Natural killer cell (primary cell): ENCODE measurements at regions of chr2 and their contacts with region 1.

Region 1: DNA sequence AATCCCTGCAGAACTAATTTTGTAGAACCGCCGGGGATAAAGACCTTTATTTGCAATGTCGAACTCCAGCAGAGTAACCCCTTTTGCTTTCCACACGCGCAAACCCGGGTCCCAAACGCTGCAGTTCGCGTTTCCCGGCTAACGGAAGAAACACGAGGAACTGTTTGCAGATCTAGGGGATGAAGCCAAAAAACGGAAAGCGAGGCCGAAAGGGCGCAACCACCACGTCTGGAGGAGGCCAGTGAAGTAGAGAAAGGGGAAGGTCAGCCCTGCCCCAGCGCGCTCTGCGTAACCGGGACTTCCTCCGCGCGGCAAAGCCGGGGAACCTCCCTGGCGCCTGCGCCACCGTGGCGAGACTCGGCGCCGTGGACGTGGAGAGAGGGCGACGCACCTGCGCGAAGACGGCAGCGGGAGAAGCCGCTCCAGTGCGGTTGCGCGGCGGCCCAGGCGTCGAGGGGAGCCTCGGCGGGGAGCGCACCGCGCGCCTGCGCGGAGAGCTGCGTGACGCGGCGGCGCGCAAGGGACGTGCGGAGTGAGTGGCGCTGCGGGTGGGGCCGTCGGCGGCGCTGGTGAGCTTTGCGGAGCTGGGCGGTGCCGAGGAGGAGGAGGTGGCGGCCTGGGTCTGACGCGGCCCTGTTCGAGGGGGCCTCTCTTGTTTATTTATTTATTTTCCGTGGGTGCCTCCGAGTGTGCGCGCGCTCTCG is at the start of gene PPP1CB:
- DNase-seq: peak; percentile 96 to 100
- ATAC-seq: peak; percentile 84 to 93 (median 85)
- H3K4me3 ChIP-seq: peak within 1 kb of the TSS; percentile 92
- H3K4me3 Mint-ChIP-seq: peak within 1 kb of the TSS; percentile 97
- H3K27ac ChIP-seq: peak within 1 kb of the TSS; percentile 98
- H3K27ac Mint-ChIP-seq: peak within 1 kb of the TSS; percentile 95 to 96
- H3K4me1 ChIP-seq: peaks cover 20% of the 10 kb centered on the region
- H3K4me1 Mint-ChIP-seq: peaks cover 44 to 45% of the 10 kb centered on the region in 2 donors
- H3K27me3 ChIP-seq: no peaks in the 10 kb centered on the region
- H3K27me3 Mint-ChIP-seq: no peaks in the 10 kb centered on the region
- CTCF ChIP-seq: peak; percentile 9
- total RNA-seq, gene PPP1CB: 157 to 200 (median 181) TPM

Region 2: DNA sequence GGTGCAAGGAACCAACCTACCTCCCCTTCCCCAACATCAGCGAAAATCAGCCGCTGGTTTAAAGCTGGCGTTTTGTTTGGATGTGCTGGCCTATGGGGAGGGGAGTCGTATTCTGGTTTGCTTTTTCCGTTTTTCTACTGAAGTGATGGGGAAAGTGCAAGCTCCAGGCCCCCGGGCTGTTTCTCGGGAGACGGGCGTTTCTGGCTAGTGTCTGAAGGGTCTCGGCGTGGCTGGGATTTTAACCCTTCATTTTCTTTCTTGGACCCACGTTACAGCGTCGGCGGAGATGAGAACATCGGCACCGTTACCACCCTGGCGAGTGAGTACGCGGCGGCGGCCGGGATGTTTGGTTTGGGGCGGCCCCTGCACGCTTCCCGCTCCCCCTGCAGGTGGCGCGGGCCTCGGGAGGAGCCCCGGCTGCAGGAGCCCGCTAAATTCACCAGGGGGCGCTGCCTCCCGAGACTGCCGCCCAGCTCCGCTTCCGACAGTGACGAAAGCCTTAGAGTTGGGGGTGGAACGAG is 184.8 kb before region 1 on chr2:
- intact Hi-C with region 1: loop called (anchors 10 kb)
- DNase-seq: peak; percentile 92 to 94
- ATAC-seq: peak; percentile 98 to 99 (median 99)
- H3K4me3 ChIP-seq: peak overlapping the region; percentile 95
- H3K4me3 Mint-ChIP-seq: peak overlapping the region; percentile 91
- H3K27ac ChIP-seq: peak overlapping the region; percentile 17
- H3K27ac Mint-ChIP-seq: peak overlapping the region; percentile 68 to 93
- H3K4me1 ChIP-seq: peaks cover 14% of the 10 kb centered on the region
- H3K4me1 Mint-ChIP-seq: peaks cover 5 to 9% of the 10 kb centered on the region in 2 donors
- H3K27me3 ChIP-seq: no peaks in the 10 kb centered on the region
- H3K27me3 Mint-ChIP-seq: peaks cover 0 to 11% of the 10 kb centered on the region in 2 donors
- CTCF ChIP-seq: peak; percentile 99

Region 3: GRCh38 chr2:28621172-28622100 is 130.0 kb before region 1 on chr2:
- intact Hi-C with region 1: loop called (anchors 10 kb)
- DNase-seq: peak; percentile 53 to 95
- ATAC-seq: peak; percentile 77 to 89 (median 81)
- H3K4me3 ChIP-seq: no peak overlapping the region
- H3K4me3 Mint-ChIP-seq: peak overlapping the region; percentile 78
- H3K27ac ChIP-seq: peak overlapping the region; percentile 92
- H3K27ac Mint-ChIP-seq: peak overlapping the region; percentile 91 to 94
- H3K4me1 ChIP-seq: peaks cover 66% of the 10 kb centered on the region
- H3K4me1 Mint-ChIP-seq: peaks cover 60 to 65% of the 10 kb centered on the region in 2 donors
- H3K27me3 ChIP-seq: no peaks in the 10 kb centered on the region
- H3K27me3 Mint-ChIP-seq: no peaks in the 10 kb centered on the region
- CTCF ChIP-seq: no peak

Region 4: DNA sequence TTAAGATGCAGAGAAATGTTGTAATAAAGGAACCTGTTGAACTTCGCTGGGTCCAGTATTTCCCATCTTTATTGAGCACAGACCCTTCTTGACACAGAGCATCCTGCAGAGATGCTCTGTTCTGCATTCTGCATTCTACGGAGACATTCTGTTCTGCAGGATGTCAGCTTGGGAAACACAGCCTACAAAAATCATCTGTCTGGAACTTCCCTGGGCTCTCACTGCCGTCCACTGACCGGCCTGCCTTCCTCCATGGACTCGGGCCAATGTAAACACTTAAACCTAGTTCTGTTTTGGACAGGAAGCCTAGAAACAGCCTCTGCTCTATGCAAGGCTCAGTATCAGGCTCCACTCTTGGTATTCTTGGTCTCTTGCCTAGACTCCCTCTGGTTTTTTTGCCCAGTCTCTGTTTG is 89.8 kb before region 1 on chr2:
- intact Hi-C with region 1: no loop called
- DNase-seq: no peak
- ATAC-seq: no peak
- H3K4me3 ChIP-seq: no peak overlapping the region
- H3K4me3 Mint-ChIP-seq: no peak overlapping the region
- H3K27ac ChIP-seq: no peak overlapping the region
- H3K27ac Mint-ChIP-seq: no peak overlapping the region
- H3K4me1 ChIP-seq: no peaks in the 10 kb centered on the region
- H3K4me1 Mint-ChIP-seq: peaks cover 0 to 4% of the 10 kb centered on the region in 2 donors
- H3K27me3 ChIP-seq: no peaks in the 10 kb centered on the region
- H3K27me3 Mint-ChIP-seq: no peaks in the 10 kb centered on the region
- CTCF ChIP-seq: no peak

Region 5: DNA sequence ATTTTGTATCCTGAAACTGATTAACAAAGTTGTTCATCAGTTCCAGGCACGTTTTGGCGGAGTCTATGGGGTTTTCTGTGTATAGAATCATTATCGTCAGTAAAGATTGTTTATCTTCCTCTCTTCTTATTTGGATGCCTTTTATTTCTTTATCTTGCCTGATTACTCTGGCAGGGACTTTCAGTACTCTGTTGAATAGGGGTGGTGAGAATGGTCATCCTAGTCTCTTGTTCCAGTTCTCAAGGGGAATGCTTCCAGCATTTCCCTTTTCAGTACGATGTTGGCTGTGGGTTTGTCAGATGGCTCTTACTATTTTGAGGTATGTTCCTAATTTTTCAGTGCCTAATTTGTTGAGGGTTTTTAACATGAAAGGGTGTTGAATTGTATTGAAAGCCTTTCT is 45.2 kb after region 1 on chr2:
- intact Hi-C with region 1: loop called (anchors 1 kb)
- DNase-seq: no peak
- ATAC-seq: no peak
- H3K4me3 ChIP-seq: no peak overlapping the region
- H3K4me3 Mint-ChIP-seq: no peak overlapping the region
- H3K27ac ChIP-seq: no peak overlapping the region
- H3K27ac Mint-ChIP-seq: peak overlapping the region; percentile 30 to 53
- H3K4me1 ChIP-seq: no peaks in the 10 kb centered on the region
- H3K4me1 Mint-ChIP-seq: peaks cover 40 to 41% of the 10 kb centered on the region in 2 donors
- H3K27me3 ChIP-seq: no peaks in the 10 kb centered on the region
- H3K27me3 Mint-ChIP-seq: no peaks in the 10 kb centered on the region
- CTCF ChIP-seq: no peak

Region 6: GRCh38 chr2:28870146-28870891 is 118.9 kb after region 1 on chr2 and contains the start of gene TRMT61B:
- intact Hi-C with region 1: loop called (anchors 5 kb)
- DNase-seq: peak; percentile 97 to 99
- ATAC-seq: peak; percentile 95 to 98 (median 96)
- H3K4me3 ChIP-seq: peak within 1 kb of the TSS; percentile 75
- H3K4me3 Mint-ChIP-seq: peak within 1 kb of the TSS; percentile 95
- H3K27ac ChIP-seq: peak within 1 kb of the TSS; percentile 87
- H3K27ac Mint-ChIP-seq: peak within 1 kb of the TSS; percentile 96 to 97
- H3K4me1 ChIP-seq: peaks cover 21% of the 10 kb centered on the region
- H3K4me1 Mint-ChIP-seq: peaks cover 28 to 29% of the 10 kb centered on the region in 2 donors
- H3K27me3 ChIP-seq: no peaks in the 10 kb centered on the region
- H3K27me3 Mint-ChIP-seq: no peaks in the 10 kb centered on the region
- CTCF ChIP-seq: no peak
- total RNA-seq, gene TRMT61B: 13.6 to 19.2 (median 18.0) TPM

Region 7: DNA sequence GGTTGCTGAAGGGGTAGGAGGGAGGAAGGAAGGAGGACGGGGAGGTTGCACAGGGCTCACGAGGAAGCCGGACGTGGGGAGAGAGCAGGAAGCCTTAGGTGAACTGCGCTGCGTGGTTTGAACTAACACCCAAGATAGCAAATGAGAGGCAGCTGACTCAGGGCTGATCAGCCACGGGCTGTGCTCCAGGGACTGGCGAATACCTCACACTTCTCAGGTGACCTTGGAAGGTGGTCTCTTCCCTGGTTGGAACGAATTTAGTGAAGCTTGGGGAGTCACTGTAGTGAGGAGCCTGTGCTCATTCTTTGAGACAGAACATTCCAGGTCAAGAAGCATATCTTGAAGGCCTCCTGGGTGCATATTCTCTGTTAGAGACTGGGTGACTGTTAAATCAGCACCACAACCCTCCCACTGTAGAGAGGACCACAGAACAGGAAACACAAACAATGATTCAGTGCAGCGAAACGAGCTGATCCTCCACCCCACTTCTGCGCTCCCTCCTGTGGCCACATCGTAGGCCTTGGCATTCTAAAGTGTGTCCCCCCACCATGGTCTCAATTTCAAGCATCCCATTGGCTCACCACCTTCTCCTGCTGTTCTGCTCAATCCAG is 263.5 kb after region 1 on chr2:
- intact Hi-C with region 1: loop called (anchors 5 kb)
- DNase-seq: peak; percentile 74 to 89
- ATAC-seq: peak; percentile 52 to 74 (median 56)
- H3K4me3 ChIP-seq: peak overlapping the region; percentile 34
- H3K4me3 Mint-ChIP-seq: peak overlapping the region; percentile 94
- H3K27ac ChIP-seq: peak overlapping the region; percentile 100
- H3K27ac Mint-ChIP-seq: peak overlapping the region; percentile 100
- H3K4me1 ChIP-seq: peaks cover 84% of the 10 kb centered on the region
- H3K4me1 Mint-ChIP-seq: peaks cover 78 to 84% of the 10 kb centered on the region in 2 donors
- H3K27me3 ChIP-seq: no peaks in the 10 kb centered on the region
- H3K27me3 Mint-ChIP-seq: no peaks in the 10 kb centered on the region
- CTCF ChIP-seq: peak; percentile 50